ENCODE measurements at regions of chr14 and their contacts with region 1.

Region 1: GRCh38 chr14:59507063-59507780 is 22.9 kb downstream of the JKAMP start:
- DNase-seq: peak; percentile 81 to 87 (median 82)
- H3K4me3 ChIP-seq: no peak overlapping the region
- H3K27ac ChIP-seq: no peak overlapping the region
- H3K4me1 ChIP-seq: peaks cover 0 to 12% (median 0%) of the 10 kb centered on the region in 4 experiments
- H3K27me3 ChIP-seq: no peaks in the 10 kb centered on the region

Region 2: DNA sequence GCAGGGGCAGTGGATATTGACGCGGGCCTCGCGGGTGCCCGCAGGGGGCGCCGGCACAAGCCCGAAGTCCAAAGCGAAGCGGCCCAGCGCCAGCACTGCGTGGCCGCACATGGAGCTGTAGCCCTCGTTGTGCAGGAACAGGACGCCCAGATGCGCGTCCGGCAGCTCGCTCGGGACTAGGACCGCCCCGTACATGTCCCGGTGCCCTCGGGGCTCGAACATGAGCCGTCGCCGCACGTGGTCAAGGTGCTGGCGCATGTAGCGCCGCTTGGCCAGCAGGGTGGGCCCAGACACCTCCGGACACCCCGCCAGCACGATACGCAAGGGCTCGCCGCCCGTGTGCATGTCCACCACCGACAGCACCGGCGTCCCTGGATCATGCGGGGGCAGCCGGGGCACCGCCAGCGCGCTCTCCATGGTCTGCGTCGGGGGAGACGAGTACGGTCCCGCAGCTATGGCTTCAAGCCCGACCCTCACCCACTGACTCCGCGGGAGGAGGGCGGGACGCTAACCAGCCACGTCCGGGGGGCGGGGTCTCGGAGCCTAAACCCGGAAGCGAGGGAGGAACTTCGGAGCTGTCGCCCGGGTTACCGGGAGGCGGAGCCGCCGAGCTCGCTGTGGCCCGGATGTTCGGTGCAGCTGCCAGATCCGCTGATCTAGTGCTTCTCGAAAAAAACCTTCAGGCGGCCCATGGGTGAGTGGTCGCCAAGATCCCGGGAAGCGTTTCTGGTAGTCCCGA is 23.2 kb before region 1 on chr14 and contains the starts of genes JKAMP and L3HYPDH:
- CTCF ChIA-PET with region 1: interaction called, 19 read pairs
- POLR2A ChIA-PET with region 1: interaction called, 3 read pairs
- DNase-seq: peak; percentile 97 to 99 (median 99)
- H3K4me3 ChIP-seq: peak within 1 kb of the TSS; percentile 81 to 97 (median 90)
- H3K27ac ChIP-seq: peak within 1 kb of the TSS; percentile 66 to 87
- H3K4me1 ChIP-seq: peaks cover 21 to 64% (median 43%) of the 10 kb centered on the region in 4 experiments
- H3K27me3 ChIP-seq: no peaks in the 10 kb centered on the region

Region 3: DNA sequence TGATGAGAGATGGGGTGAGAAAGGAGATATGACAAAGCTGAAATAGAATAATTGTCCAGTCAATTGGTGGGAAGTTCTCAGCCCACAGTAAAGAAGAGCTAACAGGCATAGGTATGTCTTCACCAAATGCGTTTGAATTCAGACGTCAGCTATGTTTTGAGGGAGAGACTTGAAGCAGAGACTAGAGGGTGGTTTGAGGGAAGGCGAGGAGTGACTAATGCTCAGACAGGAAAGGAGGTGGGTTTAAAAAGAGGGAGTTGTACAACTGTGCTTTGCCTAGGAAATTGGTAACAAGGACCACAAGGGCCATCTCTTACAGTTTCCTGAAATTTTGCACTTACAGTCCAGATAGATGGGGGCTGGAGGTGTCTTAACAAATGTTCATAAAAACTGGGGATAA is 16.5 kb before region 1 on chr14:
- CTCF ChIA-PET with region 1: interaction called, 16 read pairs
- POLR2A ChIA-PET with region 1: interaction called, 3 read pairs
- DNase-seq: peak in 2 of 3 donors; percentile 42 to 47
- H3K4me3 ChIP-seq: no peak overlapping the region
- H3K27ac ChIP-seq: no peak overlapping the region
- H3K4me1 ChIP-seq: peaks cover 7 to 25% (median 13%) of the 10 kb centered on the region in 4 experiments
- H3K27me3 ChIP-seq: no peaks in the 10 kb centered on the region

Region 4: DNA sequence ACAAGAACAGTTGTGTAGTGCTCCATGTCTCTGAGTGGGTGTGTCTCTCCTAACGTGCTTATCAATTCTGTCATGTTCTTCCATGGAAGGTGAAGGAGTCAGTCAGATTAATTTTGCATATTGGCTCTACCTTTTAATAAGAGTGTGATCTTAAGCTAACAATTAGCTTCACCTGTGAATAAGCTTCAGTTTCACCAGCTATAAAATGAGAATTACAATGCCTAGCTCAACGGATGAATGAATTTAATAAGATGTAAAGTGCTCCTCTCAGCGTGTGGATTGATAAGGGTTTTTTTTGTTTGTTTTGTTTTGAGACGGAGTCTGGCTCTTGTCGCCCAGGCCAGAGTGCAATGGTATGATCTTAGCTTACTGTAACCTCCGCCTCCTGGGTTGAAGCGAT is 36.7 kb after region 1 on chr14:
- CTCF ChIA-PET with region 1: interaction called, 18 read pairs
- POLR2A ChIA-PET with region 1: no interaction called
- DNase-seq: no peak
- H3K4me3 ChIP-seq: no peak overlapping the region
- H3K27ac ChIP-seq: no peak overlapping the region
- H3K4me1 ChIP-seq: peaks cover 2 to 8% (median 4%) of the 10 kb centered on the region in 4 experiments
- H3K27me3 ChIP-seq: no peaks in the 10 kb centered on the region

Region 5: DNA sequence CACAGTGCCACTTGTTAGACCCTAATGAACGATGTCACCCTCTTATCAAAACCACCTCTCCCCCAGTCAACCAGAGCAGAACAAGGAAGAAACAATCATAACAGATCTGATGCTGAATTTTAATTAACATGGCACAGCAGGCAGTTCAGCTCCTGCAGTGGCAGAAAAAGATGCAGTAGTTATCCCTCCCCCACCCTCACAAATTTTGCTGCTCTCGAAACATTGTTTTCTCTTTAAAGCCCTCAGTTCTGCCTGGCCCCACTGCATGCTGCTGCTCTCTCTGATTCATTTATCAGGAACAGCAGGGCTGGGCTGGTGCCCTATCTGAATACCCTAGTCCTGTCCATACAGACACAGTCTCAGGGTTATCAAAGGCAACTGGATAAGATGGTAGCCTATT is 57.1 kb after region 1 on chr14:
- CTCF ChIA-PET with region 1: interaction called, 536 read pairs
- POLR2A ChIA-PET with region 1: no interaction called
- DNase-seq: peak in 2 of 3 donors; percentile 34 to 50
- H3K4me3 ChIP-seq: peak overlapping the region in 5 of 7 experiments; percentile 29 to 56 (median 44)
- H3K27ac ChIP-seq: peak overlapping the region; percentile 59
- H3K4me1 ChIP-seq: peaks cover 21 to 74% (median 31%) of the 10 kb centered on the region in 4 experiments
- H3K27me3 ChIP-seq: no peaks in the 10 kb centered on the region

Region 6: GRCh38 chr14:59595071-59595470 is 87.8 kb after region 1 on chr14:
- CTCF ChIA-PET with region 1: no interaction called
- POLR2A ChIA-PET with region 1: no interaction called
- DNase-seq: no peak
- H3K4me3 ChIP-seq: no peak overlapping the region
- H3K27ac ChIP-seq: no peak overlapping the region
- H3K4me1 ChIP-seq: no peaks in the 10 kb centered on the region
- H3K27me3 ChIP-seq: no peaks in the 10 kb centered on the region

Region 7: DNA sequence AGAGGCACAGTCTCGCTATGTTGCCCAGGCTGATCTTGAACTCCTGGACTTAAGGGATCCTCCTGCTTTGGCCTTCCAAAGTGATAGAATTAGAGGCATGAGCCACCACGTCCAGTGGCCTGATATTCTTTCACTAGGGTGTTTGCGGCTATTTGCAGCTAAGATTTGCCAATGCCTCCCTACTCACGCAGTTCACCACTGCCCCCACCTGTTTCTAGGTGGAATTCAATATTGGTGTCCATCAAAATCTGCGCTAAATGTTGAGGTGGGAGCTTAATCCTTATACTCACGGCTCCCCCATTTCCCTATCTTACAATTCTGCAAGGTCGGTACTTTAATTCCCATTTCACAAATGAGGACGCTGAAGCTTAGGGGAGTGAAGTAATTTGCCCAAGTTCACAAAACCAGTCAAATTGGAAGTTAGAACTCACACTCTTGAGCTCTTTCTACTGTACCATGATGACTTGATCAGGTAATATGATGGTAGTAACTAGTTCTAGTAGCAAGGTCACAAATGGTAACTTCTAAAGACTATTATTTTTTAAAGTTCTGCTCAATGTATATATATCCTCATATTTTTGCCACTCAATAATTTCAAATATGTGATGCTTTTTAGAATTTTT is 390.6 kb after region 1 on chr14:
- CTCF ChIA-PET with region 1: interaction called, 13 read pairs
- POLR2A ChIA-PET with region 1: no interaction called
- DNase-seq: peak; percentile 50 to 70 (median 65)
- H3K4me3 ChIP-seq: no peak overlapping the region
- H3K27ac ChIP-seq: no peak overlapping the region
- H3K4me1 ChIP-seq: peaks cover 0 to 4% (median 0%) of the 10 kb centered on the region in 4 experiments
- H3K27me3 ChIP-seq: peaks cover 0 to 2% (median 0%) of the 10 kb centered on the region in 5 experiments

Region 8: GRCh38 chr14:60248697-60249318 is 741.6 kb after region 1 on chr14 and contains the start of gene PPM1A:
- CTCF ChIA-PET with region 1: no interaction called
- POLR2A ChIA-PET with region 1: no interaction called
- DNase-seq: peak; percentile 95 to 98 (median 97)
- H3K4me3 ChIP-seq: peak within 1 kb of the TSS; percentile 65 to 95 (median 84)
- H3K27ac ChIP-seq: peak within 1 kb of the TSS; percentile 94 to 98
- H3K4me1 ChIP-seq: peaks cover 21 to 44% (median 31%) of the 10 kb centered on the region in 4 experiments
- H3K27me3 ChIP-seq: no peaks in the 10 kb centered on the region

Measured in common myeloid progenitor, CD34-positive (primary cell).